Activated B cell treated with CpG ODN at 0.5 μM for 24 hours (primary cell): ENCODE measurements at regions of chr5 and their contacts with region 1.

Region 1: GRCh38 chr5:112707187-112708102 is 30.2 kb upstream of the APC start:
- DNase-seq: peak; percentile 86
- ATAC-seq: peak; percentile 95
- H3K4me3 Mint-ChIP-seq: peak overlapping the region; percentile 95
- H3K27ac Mint-ChIP-seq: peak overlapping the region; percentile 87
- H3K4me1 Mint-ChIP-seq: peaks cover 49% of the 10 kb centered on the region
- H3K27me3 Mint-ChIP-seq: no peaks in the 10 kb centered on the region
- CTCF ChIP-seq: no peak

Region 2: GRCh38 chr5:110738812-110739651 is 1968.4 kb before region 1 on chr5 and contains the start of gene SLC25A46:
- CTCF ChIA-PET with region 1: no interaction called
- POLR2A ChIA-PET with region 1: no interaction called
- intact Hi-C with region 1: loop called (anchors 1 kb)
- DNase-seq: peak; percentile 79
- ATAC-seq: peak; percentile 82
- H3K4me3 Mint-ChIP-seq: peak within 1 kb of the TSS; percentile 97
- H3K27ac Mint-ChIP-seq: peak within 1 kb of the TSS; percentile 96
- H3K4me1 Mint-ChIP-seq: peaks cover 21% of the 10 kb centered on the region
- H3K27me3 Mint-ChIP-seq: peaks cover 3% of the 10 kb centered on the region
- CTCF ChIP-seq: no peak
- total RNA-seq, gene SLC25A46: 39.9 and 42.2 TPM in 2 replicates

Region 3: DNA sequence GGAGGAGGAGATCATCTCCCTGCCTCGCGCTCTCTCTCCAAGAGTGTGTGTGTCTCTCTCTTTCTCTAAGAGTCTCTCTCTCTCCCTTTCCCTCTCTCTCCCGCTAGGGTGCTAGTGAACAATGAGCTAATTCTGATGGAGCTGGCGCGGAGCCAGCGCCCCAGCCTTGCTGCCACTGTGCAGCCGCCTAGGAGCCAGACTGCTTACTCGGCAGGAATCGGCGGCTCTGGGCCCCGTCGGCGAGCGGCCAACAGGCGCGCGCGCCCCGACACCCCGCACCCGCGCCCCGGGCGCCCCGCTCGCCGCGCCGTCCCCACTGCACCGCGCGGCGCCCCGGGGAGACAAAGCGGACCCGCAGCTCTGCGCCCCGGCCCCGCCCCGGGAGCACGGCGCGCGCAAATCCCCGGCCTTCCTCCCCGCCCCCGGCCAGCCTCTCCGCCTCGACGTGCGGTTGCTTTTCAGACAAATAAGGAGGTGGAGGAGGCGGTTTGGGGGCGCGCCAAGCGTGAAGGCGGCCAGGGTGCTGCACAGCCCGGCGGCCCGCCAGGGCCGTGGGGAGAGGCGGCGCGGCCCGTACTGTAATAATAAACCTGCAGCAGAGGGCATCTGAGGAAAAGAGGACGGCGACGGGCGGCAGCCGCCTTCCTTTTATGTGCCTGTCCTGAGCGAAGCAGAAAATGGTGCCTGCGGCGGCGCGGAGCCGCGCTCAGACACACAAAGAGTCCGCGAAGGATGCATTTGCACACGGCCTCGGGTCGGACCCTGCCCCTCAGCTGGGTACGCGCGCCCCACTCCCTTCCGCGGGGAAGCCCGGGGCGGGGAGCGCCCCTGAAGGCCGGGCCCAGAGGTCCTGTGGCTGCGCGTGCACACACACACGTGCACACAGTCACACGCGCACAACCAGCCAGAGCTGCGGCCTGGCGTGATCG is 949.8 kb before region 1 on chr5:
- CTCF ChIA-PET with region 1: no interaction called
- POLR2A ChIA-PET with region 1: no interaction called
- intact Hi-C with region 1: loop called (anchors 10 kb)
- DNase-seq: peak; percentile 81
- ATAC-seq: peak; percentile 81
- H3K4me3 Mint-ChIP-seq: peak overlapping the region; percentile 88
- H3K27ac Mint-ChIP-seq: peak overlapping the region; percentile 91
- H3K4me1 Mint-ChIP-seq: peaks cover 23% of the 10 kb centered on the region
- H3K27me3 Mint-ChIP-seq: no peaks in the 10 kb centered on the region
- CTCF ChIP-seq: no peak

Region 4: GRCh38 chr5:112529525-112529924 is 177.9 kb before region 1 on chr5:
- CTCF ChIA-PET with region 1: no interaction called
- POLR2A ChIA-PET with region 1: no interaction called
- intact Hi-C with region 1: loop called (anchors 5 kb)
- DNase-seq: no peak
- ATAC-seq: peak; percentile 53
- H3K4me3 Mint-ChIP-seq: no peak overlapping the region
- H3K27ac Mint-ChIP-seq: peak overlapping the region; percentile 48
- H3K4me1 Mint-ChIP-seq: peaks cover 96% of the 10 kb centered on the region
- H3K27me3 Mint-ChIP-seq: no peaks in the 10 kb centered on the region
- CTCF ChIP-seq: no peak

Region 5: DNA sequence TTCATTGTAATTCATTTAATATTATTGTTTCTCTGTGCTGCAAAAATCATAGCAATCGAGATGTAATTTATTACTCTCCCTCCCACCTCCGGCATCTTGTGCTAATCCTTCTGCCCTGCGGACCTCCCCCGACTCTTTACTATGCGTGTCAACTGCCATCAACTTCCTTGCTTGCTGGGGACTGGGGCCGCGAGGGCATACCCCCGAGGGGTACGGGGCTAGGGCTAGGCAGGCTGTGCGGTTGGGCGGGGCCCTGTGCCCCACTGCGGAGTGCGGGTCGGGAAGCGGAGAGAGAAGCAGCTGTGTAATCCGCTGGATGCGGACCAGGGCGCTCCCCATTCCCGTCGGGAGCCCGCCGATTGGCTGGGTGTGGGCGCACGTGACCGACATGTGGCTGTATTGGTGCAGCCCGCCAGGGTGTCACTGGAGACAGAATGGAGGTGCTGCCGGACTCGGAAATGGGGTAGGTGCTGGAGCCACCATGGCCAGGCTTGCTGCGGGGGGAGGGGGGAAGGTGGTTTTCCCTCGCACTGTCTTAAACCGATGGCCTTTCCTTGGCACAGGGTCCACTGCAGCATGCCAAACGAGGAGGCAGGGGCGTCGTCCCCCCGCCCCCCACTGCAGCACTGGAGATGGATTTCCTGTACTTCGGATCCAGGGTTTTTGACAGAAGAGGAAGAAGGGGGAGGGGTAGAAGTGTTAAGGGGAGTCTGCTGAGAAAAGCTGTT is 30.2 kb after region 1 on chr5 and contains the start of gene APC:
- CTCF ChIA-PET with region 1: interaction called, 3 read pairs
- POLR2A ChIA-PET with region 1: interaction called, 7 read pairs
- intact Hi-C with region 1: loop called (anchors 1 kb)
- DNase-seq: peak; percentile 72
- ATAC-seq: peak; percentile 97
- H3K4me3 Mint-ChIP-seq: peak within 1 kb of the TSS; percentile 96
- H3K27ac Mint-ChIP-seq: peak within 1 kb of the TSS; percentile 65
- H3K4me1 Mint-ChIP-seq: peaks cover 25% of the 10 kb centered on the region
- H3K27me3 Mint-ChIP-seq: no peaks in the 10 kb centered on the region
- CTCF ChIP-seq: no peak
- total RNA-seq, gene APC: 35.8 and 41.7 TPM in 2 replicates

Region 6: DNA sequence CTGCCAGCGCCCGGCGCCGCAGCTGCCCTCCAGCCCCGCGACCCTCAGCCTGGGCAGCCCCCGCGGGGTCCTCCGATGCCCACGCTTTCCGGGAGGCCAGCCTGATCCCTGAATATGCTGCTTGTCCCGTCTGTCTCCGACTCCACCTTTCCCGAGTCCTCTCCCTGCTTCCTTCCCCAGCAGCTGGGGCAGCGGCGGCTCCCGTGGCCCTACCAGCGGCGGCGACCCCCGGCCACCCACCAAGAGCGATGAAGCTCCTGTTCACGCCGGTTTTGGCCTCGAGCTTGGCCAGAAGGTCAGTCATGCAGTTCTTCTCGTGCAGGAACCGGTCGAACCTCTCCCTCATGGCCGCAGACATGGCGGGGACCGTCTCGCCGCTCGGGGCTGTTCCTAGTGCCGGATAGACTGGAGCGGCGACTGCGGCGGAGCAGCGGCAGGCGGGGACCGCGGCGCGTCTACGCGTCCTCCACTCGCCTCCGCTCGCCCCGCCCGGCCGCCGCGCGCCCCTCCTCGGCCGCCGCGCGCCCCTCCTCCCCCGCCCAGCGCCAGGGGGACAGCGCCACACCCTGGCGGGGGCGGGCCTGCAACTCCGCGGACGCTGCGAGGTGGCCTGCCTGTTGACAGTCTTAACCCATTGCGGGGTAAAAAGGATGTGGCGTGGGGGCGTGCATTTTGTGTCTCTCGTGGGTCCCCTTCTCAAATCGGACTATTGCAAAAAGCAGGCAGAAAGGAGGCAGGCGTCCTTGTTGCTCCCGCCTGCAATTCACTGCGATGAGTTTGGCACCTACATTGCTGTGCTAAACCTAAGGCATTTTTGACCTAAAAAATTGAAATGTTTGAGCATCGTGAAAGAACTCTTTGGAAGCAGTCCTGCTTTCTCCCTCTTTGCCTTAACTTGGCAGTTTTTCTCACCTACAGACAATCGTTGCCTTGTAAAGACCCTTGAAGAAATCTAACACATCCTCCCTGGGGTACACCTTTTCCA is 214.7 kb after region 1 on chr5 and contains the start of gene REEP5:
- CTCF ChIA-PET with region 1: no interaction called
- POLR2A ChIA-PET with region 1: no interaction called
- intact Hi-C with region 1: loop called (anchors 1 kb)
- DNase-seq: peak; percentile 85
- ATAC-seq: peak; percentile 77
- H3K4me3 Mint-ChIP-seq: peak within 1 kb of the TSS; percentile 96
- H3K27ac Mint-ChIP-seq: peak within 1 kb of the TSS; percentile 94
- H3K4me1 Mint-ChIP-seq: peaks cover 80% of the 10 kb centered on the region
- H3K27me3 Mint-ChIP-seq: no peaks in the 10 kb centered on the region
- CTCF ChIP-seq: no peak
- total RNA-seq, gene REEP5: 44.5 and 46.8 TPM in 2 replicates

Region 7: DNA sequence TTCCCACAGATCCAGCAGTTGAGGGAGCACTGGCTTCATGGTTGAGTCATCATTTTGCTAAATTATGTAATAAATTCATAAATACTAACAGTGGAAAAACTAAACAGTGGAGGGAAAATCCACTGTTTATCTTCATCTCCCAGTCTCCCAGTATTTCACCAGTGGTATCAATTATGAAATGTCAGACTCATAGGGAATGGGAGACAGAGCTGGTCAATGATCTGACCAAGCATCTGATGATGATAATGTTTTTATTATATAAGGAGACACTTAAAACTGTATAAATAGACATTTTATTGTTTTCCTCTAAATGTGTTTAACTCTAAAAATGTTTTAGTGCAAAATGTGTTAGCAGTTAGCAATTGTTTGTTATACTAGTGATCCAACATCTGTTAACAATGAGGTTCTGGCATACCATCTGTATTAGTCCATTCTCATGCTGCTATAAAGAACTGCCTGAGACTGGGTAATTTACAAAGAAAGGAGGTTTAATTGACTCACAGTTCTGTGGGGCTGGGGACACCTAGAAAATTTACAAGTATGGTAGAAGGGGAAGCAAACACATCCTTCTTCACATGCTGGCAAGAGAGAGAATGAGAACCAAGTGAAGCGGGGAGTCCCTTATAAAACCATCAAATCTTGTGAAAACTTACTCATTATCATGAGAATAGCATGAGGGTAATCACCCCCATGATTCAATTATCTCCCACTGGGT is 226.4 kb after region 1 on chr5:
- CTCF ChIA-PET with region 1: no interaction called
- POLR2A ChIA-PET with region 1: no interaction called
- intact Hi-C with region 1: no loop called
- DNase-seq: no peak
- ATAC-seq: no peak
- H3K4me3 Mint-ChIP-seq: no peak overlapping the region
- H3K27ac Mint-ChIP-seq: no peak overlapping the region
- H3K4me1 Mint-ChIP-seq: peaks cover 36% of the 10 kb centered on the region
- H3K27me3 Mint-ChIP-seq: no peaks in the 10 kb centered on the region
- CTCF ChIP-seq: no peak

Region 8: DNA sequence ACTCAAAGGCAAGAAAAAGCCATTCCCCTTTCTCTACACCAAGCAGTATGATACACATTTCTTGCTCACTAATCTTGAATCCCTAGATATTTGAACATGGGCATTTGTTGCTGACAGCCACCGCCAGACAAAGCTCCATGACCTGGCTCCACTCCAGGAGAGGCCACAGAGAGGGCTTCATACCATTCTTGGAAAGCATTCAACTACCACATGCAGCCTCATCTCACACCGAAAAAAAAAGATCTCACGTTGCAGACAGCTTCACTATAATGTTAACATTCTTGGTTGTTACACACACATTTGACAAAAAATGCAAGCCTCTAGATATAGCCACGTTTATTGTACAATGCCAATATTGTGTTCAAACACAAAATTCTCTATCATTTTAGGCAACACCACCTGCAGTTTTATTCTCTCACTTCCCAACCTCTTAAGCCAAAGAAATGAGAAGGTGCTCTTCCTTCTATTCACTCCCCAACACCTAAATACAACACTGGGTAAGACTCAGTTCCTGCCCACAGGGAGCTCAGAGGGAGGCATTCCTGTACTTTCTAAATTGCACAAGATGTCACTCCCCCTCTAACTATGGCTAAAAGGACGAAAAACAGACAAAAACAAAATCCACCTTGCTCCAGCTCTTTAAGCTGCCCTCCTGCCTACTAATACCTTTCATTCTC is 504.9 kb after region 1 on chr5:
- CTCF ChIA-PET with region 1: no interaction called
- POLR2A ChIA-PET with region 1: no interaction called
- intact Hi-C with region 1: no loop called
- DNase-seq: no peak
- ATAC-seq: no peak
- H3K4me3 Mint-ChIP-seq: no peak overlapping the region
- H3K27ac Mint-ChIP-seq: no peak overlapping the region
- H3K4me1 Mint-ChIP-seq: no peaks in the 10 kb centered on the region
- H3K27me3 Mint-ChIP-seq: peaks cover 11% of the 10 kb centered on the region
- CTCF ChIP-seq: no peak